ENCODE measurements at regions of chrX and their contacts with region 1.

Region 1: DNA sequence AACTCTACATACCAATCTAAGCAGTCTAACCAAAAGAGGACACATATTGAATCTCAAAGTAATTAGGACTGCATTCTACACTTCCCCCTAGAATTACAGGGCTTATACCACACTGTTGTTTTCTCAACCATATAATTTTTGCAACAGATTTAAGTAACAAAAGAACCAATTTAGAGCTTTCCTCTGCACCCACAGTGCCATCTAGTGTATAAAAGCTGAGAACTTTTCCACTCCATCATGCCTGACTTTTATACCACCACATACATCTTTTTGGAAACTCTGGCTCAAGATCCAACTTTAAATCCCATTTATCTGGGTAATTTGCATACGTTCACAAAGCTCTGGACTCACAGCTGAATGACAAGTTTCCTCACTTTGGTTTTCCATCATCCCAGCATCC is 99.5 kb downstream of the EFHC2 start:
- H3K4me3 Mint-ChIP-seq: no peak overlapping the region
- H3K27ac Mint-ChIP-seq: no peak overlapping the region
- H3K4me1 Mint-ChIP-seq: peaks cover 9% of the 10 kb centered on the region
- H3K27me3 Mint-ChIP-seq: peaks cover 6% of the 10 kb centered on the region

Region 2: GRCh38 chrX:43836435-43837184 is 407.4 kb before region 1 on chrX:
- intact Hi-C with region 1: loop called (anchors 10 kb)
- H3K4me3 Mint-ChIP-seq: no peak overlapping the region
- H3K27ac Mint-ChIP-seq: no peak overlapping the region
- H3K4me1 Mint-ChIP-seq: no peaks in the 10 kb centered on the region
- H3K27me3 Mint-ChIP-seq: peaks cover 2% of the 10 kb centered on the region

Region 3: DNA sequence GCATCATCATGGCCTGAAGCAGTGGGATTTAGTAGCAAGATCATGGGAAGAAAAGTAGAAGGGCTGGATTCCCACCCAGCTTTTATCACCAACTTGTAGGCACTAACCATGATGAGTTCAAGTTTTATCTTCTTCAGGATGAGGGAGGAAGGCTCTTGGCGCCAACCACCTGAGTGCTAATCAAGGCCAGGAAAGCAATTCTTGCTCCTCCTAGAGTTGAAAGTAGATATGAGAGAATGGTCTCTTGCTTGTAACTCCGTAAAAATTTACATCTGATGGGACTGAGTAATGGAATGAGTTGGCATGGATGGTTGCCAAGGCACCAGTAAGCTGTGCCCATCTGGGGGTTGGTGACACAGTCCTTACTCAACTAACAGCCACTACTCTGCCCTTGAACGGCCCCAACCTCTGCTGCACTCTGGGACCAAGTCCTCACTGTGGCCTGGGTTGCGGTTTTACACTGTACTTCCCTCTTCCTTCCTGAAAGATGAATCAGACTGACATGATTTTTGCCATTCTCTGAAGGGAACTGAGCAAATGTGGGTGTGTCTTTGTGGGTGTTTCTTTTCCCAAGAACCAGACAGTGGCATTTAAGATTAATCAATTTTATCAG is 231.4 kb before region 1 on chrX:
- intact Hi-C with region 1: no loop called
- H3K4me3 Mint-ChIP-seq: peak overlapping the region; percentile 13
- H3K27ac Mint-ChIP-seq: peak overlapping the region; percentile 69
- H3K4me1 Mint-ChIP-seq: peaks cover 25% of the 10 kb centered on the region
- H3K27me3 Mint-ChIP-seq: no peaks in the 10 kb centered on the region

Region 4: DNA sequence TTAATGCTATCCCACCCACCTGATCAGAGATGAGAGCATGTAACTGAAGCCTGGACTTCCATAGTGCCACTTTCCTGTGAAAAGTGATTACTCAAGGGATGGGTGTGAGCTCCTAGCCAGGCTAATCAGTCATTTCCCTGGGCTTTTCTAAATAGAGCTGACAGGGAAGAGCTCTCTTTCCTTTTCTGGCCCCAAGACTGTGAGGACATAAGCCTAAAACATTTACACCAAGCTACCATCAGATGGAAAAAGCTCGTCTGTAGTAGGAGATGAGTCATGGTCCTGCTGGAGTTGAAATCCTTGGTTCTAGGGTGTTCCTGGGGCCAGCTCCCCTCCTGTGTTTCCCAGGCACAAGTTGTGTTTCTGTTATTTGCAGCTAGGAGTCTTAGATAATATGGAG is 218.5 kb before region 1 on chrX:
- intact Hi-C with region 1: loop called (anchors 10 kb)
- H3K4me3 Mint-ChIP-seq: no peak overlapping the region
- H3K27ac Mint-ChIP-seq: peak overlapping the region; percentile 30
- H3K4me1 Mint-ChIP-seq: peaks cover 25% of the 10 kb centered on the region
- H3K27me3 Mint-ChIP-seq: no peaks in the 10 kb centered on the region

Region 5: GRCh38 chrX:44305921-44306735 is 62.1 kb after region 1 on chrX:
- intact Hi-C with region 1: no loop called
- H3K4me3 Mint-ChIP-seq: no peak overlapping the region
- H3K27ac Mint-ChIP-seq: no peak overlapping the region
- H3K4me1 Mint-ChIP-seq: no peaks in the 10 kb centered on the region
- H3K27me3 Mint-ChIP-seq: no peaks in the 10 kb centered on the region